Ascending aorta (tissue), 2 donors: ENCODE measurements at regions of chr13 and their contacts with region 1.

Region 1: GRCh38 chr13:75803164-75803611 is 167.1 kb downstream of the LMO7 start:
- DNase-seq: no peak
- H3K4me3 ChIP-seq: peak overlapping the region in 1 of 2 donors; percentile 63
- H3K27ac ChIP-seq: peak overlapping the region; percentile 86 to 88
- H3K4me1 ChIP-seq: peaks cover 3 to 10% of the 10 kb centered on the region in 2 donors
- H3K27me3 ChIP-seq: no peaks in the 10 kb centered on the region
- CTCF ChIP-seq: no peak

Region 2: GRCh38 chr13:75675421-75675820 is 127.8 kb before region 1 on chr13:
- intact Hi-C with region 1: no loop called
- DNase-seq: no peak
- H3K4me3 ChIP-seq: peak overlapping the region in 1 of 2 donors; percentile 57
- H3K27ac ChIP-seq: no peak overlapping the region
- H3K4me1 ChIP-seq: no peaks in the 10 kb centered on the region
- H3K27me3 ChIP-seq: no peaks in the 10 kb centered on the region
- CTCF ChIP-seq: no peak

Region 3: DNA sequence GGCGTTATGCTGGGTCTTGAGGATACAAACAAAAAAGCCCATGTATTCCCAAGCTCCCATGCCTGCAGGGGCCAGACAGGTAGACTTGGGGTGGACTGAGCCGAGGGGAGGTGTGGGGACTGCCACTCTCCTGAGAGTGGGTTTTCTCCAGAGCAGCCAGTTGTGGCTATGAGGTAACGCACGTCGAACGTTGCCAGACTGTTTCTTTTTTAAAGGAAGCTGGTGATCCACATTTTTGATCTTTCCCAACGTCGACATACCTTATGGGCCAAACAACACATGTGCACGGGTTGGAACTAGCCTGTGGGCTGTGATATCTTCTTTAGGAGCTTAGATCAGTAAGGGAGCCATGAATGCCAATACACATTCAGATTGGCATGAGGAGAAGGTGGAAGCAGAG is 106.4 kb before region 1 on chr13:
- intact Hi-C with region 1: loop called (anchors 2 kb)
- DNase-seq: no peak
- H3K4me3 ChIP-seq: no peak overlapping the region
- H3K27ac ChIP-seq: no peak overlapping the region
- H3K4me1 ChIP-seq: peaks cover 0 to 14% of the 10 kb centered on the region in 2 donors
- H3K27me3 ChIP-seq: no peaks in the 10 kb centered on the region
- CTCF ChIP-seq: no peak

Region 4: GRCh38 chr13:75760131-75761021 is 42.8 kb before region 1 on chr13:
- intact Hi-C with region 1: loop called (anchors 5 kb)
- DNase-seq: no peak
- H3K4me3 ChIP-seq: peak overlapping the region; percentile 47 to 60
- H3K27ac ChIP-seq: peak overlapping the region; percentile 77 to 80
- H3K4me1 ChIP-seq: peaks cover 0 to 25% of the 10 kb centered on the region in 2 donors
- H3K27me3 ChIP-seq: no peaks in the 10 kb centered on the region
- CTCF ChIP-seq: no peak

Region 5: DNA sequence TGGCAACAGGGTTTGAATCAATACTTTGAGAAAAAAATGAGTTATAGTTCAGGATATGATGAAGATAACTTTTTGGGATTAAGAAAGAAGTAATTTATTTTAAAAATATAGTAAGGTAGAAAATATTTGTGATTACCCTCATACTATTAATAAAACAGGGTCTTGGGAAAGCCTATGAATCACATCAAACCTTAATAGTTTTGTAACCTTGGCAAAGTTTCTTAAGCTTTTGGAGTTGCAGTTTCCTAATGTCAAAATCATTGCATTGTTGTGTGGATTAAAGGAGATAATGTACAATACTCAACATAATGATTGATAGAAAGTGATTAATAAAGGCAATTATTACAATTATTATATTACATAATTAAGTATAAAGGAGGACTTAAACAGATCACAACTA is 18.1 kb before region 1 on chr13:
- intact Hi-C with region 1: loop called (anchors 2 kb)
- DNase-seq: no peak
- H3K4me3 ChIP-seq: no peak overlapping the region
- H3K27ac ChIP-seq: peak overlapping the region; percentile 3 to 25
- H3K4me1 ChIP-seq: peaks cover 5 to 21% of the 10 kb centered on the region in 2 donors
- H3K27me3 ChIP-seq: no peaks in the 10 kb centered on the region
- CTCF ChIP-seq: no peak